ENCODE measurements at regions of chr14 and their contacts with region 1.

Region 1: DNA sequence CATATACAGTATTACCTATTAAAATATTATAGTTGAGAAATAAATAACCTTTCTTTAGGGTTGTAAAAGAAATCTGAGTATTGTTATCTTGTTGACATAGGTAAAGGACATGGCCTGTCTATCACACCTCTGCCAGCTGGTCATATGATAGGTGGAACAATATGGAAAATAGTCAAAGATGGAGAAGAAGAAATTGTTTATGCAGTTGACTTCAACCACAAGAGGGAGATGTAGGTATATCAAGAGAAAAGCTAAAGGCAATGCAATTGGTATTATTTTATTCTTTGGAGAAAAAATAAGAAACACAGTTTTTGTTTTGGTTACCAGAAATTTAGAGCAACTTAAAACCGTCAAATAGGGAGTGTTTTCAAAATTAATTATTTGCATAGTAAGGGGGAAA is 13.5 kb downstream of the CPSF2 start:
- DNase-seq: peak; percentile 35
- ATAC-seq: peak; percentile 67
- H3K4me3 ChIP-seq: no peak overlapping the region
- H3K27ac ChIP-seq: no peak overlapping the region
- H3K4me1 ChIP-seq: no peaks in the 10 kb centered on the region
- H3K27me3 ChIP-seq: no peaks in the 10 kb centered on the region
- CTCF ChIP-seq: peak; percentile 47 to 62 (median 49); a peak in 5 of 6 replicates
- POLR2A ChIP-seq: no peak
- RAD21 ChIP-seq: peak; percentile 72

Region 2: GRCh38 chr14:92074555-92074954 is 60.7 kb before region 1 on chr14:
- CTCF ChIA-PET with region 1: no interaction called
- POLR2A ChIA-PET with region 1: no interaction called
- RAD21 ChIA-PET with region 1: no interaction called
- intact Hi-C with region 1: no loop called
- DNase-seq: no peak
- ATAC-seq: no peak
- H3K4me3 ChIP-seq: no peak overlapping the region
- H3K27ac ChIP-seq: no peak overlapping the region
- H3K4me1 ChIP-seq: no peaks in the 10 kb centered on the region
- H3K27me3 ChIP-seq: no peaks in the 10 kb centered on the region
- CTCF ChIP-seq: no peak
- POLR2A ChIP-seq: no peak
- RAD21 ChIP-seq: no peak

Region 3: GRCh38 chr14:92154283-92154942 is 19.1 kb after region 1 on chr14:
- CTCF ChIA-PET with region 1: no interaction called
- POLR2A ChIA-PET with region 1: no interaction called
- RAD21 ChIA-PET with region 1: no interaction called
- intact Hi-C with region 1: no loop called
- DNase-seq: no peak
- ATAC-seq: no peak
- H3K4me3 ChIP-seq: no peak overlapping the region
- H3K27ac ChIP-seq: no peak overlapping the region
- H3K4me1 ChIP-seq: no peaks in the 10 kb centered on the region
- H3K27me3 ChIP-seq: no peaks in the 10 kb centered on the region
- CTCF ChIP-seq: no peak
- POLR2A ChIP-seq: no peak
- RAD21 ChIP-seq: no peak

Region 4: GRCh38 chr14:92352158-92352985 is 217.1 kb after region 1 on chr14:
- CTCF ChIA-PET with region 1: interaction called, 14 read pairs
- POLR2A ChIA-PET with region 1: no interaction called
- RAD21 ChIA-PET with region 1: interaction called in 1 of 2 experiments, 4 read pairs
- intact Hi-C with region 1: loop called (anchors 10 kb)
- DNase-seq: peak; percentile 40
- ATAC-seq: peak; percentile 82
- H3K4me3 ChIP-seq: no peak overlapping the region
- H3K27ac ChIP-seq: no peak overlapping the region
- H3K4me1 ChIP-seq: no peaks in the 10 kb centered on the region
- H3K27me3 ChIP-seq: no peaks in the 10 kb centered on the region
- CTCF ChIP-seq: peak; percentile 41 to 89 (median 72); a peak in 5 of 6 replicates
- POLR2A ChIP-seq: no peak
- RAD21 ChIP-seq: peak; percentile 62

Region 5: GRCh38 chr14:92456215-92457015 is 321.1 kb after region 1 on chr14:
- CTCF ChIA-PET with region 1: interaction called, 8 read pairs
- POLR2A ChIA-PET with region 1: no interaction called
- RAD21 ChIA-PET with region 1: no interaction called
- intact Hi-C with region 1: loop called (anchors 1 kb)
- DNase-seq: peak; percentile 50
- ATAC-seq: peak; percentile 94
- H3K4me3 ChIP-seq: no peak overlapping the region
- H3K27ac ChIP-seq: no peak overlapping the region
- H3K4me1 ChIP-seq: peaks cover 0 to 12% of the 10 kb centered on the region in 2 experiments; a peak in 2 of 4 replicates
- H3K27me3 ChIP-seq: no peaks in the 10 kb centered on the region
- CTCF ChIP-seq: peak; percentile 70 to 78 (median 75)
- POLR2A ChIP-seq: no peak
- RAD21 ChIP-seq: peak; percentile 86

Region 6: GRCh38 chr14:92603309-92604242 is 468.3 kb after region 1 on chr14:
- CTCF ChIA-PET with region 1: no interaction called
- POLR2A ChIA-PET with region 1: no interaction called
- RAD21 ChIA-PET with region 1: no interaction called
- intact Hi-C with region 1: loop called (anchors 10 kb)
- DNase-seq: no peak
- ATAC-seq: 0 out of 2 replicates have a peak, but pooled peaks have one; percentile 55
- H3K4me3 ChIP-seq: no peak overlapping the region
- H3K27ac ChIP-seq: no peak overlapping the region
- H3K4me1 ChIP-seq: peaks cover 0 to 7% of the 10 kb centered on the region in 2 experiments; a peak in 1 of 4 replicates
- H3K27me3 ChIP-seq: no peaks in the 10 kb centered on the region
- CTCF ChIP-seq: no peak
- POLR2A ChIP-seq: no peak
- RAD21 ChIP-seq: peak; percentile 48

Region 7: DNA sequence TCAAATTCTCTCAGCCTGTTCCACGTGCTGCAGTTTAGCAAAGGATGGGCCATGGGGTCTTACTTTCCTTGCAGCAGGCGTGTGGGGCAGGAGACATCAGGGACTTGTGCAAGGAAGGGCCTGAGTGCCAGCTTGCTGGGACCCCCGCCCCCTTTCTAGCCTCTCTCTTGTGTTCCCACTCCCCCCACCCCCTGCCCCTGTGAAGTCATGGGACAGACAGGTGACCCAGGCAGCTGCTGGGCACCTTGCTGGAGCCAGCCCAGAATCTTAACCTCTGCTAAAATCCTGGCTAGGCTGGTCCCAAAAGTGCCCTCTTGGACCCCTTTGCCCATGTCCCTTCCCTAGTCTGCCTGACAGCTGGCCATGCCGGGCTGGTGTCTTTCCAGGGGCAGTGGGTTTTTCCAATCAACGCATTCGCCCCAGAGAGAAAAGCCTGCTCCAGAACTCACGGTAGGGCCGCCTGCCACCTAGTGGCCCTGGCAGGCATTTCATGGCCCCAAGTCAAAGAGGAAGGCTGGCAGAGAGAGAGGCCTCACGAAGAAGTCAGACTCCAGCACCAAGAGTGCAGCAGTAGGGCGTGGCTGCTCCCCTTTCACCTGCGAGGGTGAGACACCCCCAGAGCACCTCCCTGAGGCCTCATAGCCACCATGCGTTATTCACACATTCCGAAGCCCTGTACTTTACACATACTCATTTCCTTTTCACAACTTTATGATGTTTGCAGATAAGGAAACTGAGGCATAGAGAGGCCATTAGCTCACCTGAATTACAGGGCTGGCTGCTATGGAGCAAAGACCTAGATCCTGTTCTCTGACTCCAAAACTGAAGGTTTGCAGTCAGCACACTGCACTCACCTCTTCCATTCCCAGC is 545.7 kb after region 1 on chr14:
- CTCF ChIA-PET with region 1: no interaction called
- POLR2A ChIA-PET with region 1: no interaction called
- RAD21 ChIA-PET with region 1: no interaction called
- intact Hi-C with region 1: loop called (anchors 5 kb)
- DNase-seq: peak; percentile 26
- ATAC-seq: peak; percentile 85
- H3K4me3 ChIP-seq: no peak overlapping the region
- H3K27ac ChIP-seq: no peak overlapping the region
- H3K4me1 ChIP-seq: peaks cover 8 to 18% of the 10 kb centered on the region in 2 experiments; a peak in 3 of 4 replicates
- H3K27me3 ChIP-seq: no peaks in the 10 kb centered on the region
- CTCF ChIP-seq: peak; percentile 79 to 92 (median 90)
- POLR2A ChIP-seq: no peak
- RAD21 ChIP-seq: peak; percentile 85

Measured in HCT116 (cell line).